Breast epithelium (tissue), 4 donors: ENCODE measurements at regions of chr12 and their contacts with region 1.

Region 1: GRCh38 chr12:214003-214741 is at the start of gene SLC6A12:
- DNase-seq: no peak
- H3K4me3 ChIP-seq: peak within 1 kb of the TSS in 2 of 3 donors; percentile 15 to 20
- H3K27ac ChIP-seq: no peak within 1 kb of the TSS
- H3K4me1 ChIP-seq: no peaks in the 10 kb centered on the region
- H3K27me3 ChIP-seq: peaks cover 0 to 3% of the 10 kb centered on the region in 2 donors
- CTCF ChIP-seq: no peak
- POLR2A ChIP-seq: no peak
- total RNA-seq, gene SLC6A12: 0.33 to 2.1 (median 1.3) TPM

Region 2: GRCh38 chr12:182381-182892 is 31.7 kb before region 1 on chr12:
- intact Hi-C with region 1: loop called (anchors 1 kb)
- DNase-seq: no peak
- H3K4me3 ChIP-seq: no peak overlapping the region
- H3K27ac ChIP-seq: no peak overlapping the region
- H3K4me1 ChIP-seq: no peaks in the 10 kb centered on the region
- H3K27me3 ChIP-seq: peaks cover 0 to 5% of the 10 kb centered on the region in 2 donors
- CTCF ChIP-seq: no peak
- POLR2A ChIP-seq: no peak